ENCODE measurements at regions of chr15 and their contacts with region 1.

Region 1: DNA sequence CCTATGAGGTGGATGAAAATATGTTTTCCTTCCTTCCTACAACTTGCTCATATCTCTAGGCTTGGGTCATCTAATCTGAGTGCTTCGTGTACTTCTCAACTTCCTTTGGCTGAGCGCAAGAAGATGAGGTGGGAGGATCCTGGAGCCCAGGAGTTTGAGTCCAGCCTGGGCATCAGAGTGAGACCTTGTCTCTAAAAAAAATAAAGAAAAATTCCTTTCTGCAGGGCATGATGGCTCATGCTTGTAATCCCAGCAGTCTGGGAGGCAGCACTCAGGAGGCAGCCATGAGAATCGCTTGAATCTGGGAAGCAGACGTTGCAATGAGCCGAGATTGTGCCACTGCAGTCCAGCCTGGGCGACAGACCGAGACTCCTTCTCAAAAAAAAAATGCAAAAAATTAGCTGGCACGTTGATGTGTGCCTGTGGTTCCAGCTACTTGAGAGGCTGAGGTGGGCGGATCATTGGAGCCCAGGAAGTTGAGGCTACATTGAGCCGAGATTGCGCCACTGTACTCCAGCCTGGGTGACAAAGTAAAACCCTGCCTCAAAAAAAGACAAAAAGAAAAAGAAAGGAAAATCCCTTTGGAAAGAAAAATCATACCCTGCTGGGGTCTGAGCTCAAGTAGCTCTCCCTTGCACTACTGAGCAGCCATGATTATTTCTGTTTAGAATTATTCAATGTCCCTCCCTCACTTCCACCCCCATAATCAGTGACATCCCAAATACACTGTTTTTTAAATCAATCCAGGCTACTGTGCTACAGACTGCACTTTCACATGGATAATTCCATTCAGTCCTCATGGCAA is 28.0 kb upstream of the RAB11A start:
- DNase-seq: peak; percentile 22
- ATAC-seq: peak; percentile 70
- H3K4me3 ChIP-seq: no peak overlapping the region
- H3K27ac ChIP-seq: no peak overlapping the region
- H3K4me1 ChIP-seq: peaks cover 2% of the 10 kb centered on the region; the same call in 1 of the 2 replicates
- H3K27me3 ChIP-seq: no peaks in the 10 kb centered on the region
- CTCF ChIP-seq: no peak
- POLR2A ChIP-seq: no peak
- RAD21 ChIP-seq: no peak

Region 2: GRCh38 chr15:65512807-65513416 is 328.4 kb before region 1 on chr15:
- CTCF ChIA-PET with region 1: no interaction called
- POLR2A ChIA-PET with region 1: no interaction called
- dilution Hi-C with region 1: no loop called
- in situ Hi-C with region 1: no loop called
- intact Hi-C with region 1: no loop called
- DNase-seq: no peak
- ATAC-seq: no peak
- H3K4me3 ChIP-seq: no peak overlapping the region
- H3K27ac ChIP-seq: no peak overlapping the region
- H3K4me1 ChIP-seq: peaks cover 4% of the 10 kb centered on the region
- H3K27me3 ChIP-seq: no peaks in the 10 kb centered on the region
- CTCF ChIP-seq: no peak
- POLR2A ChIP-seq: no peak
- RAD21 ChIP-seq: no peak

Region 3: GRCh38 chr15:65752151-65752700 is 89.1 kb before region 1 on chr15:
- CTCF ChIA-PET with region 1: no interaction called
- POLR2A ChIA-PET with region 1: interaction called, 3 read pairs
- dilution Hi-C with region 1: no loop called
- in situ Hi-C with region 1: no loop called
- intact Hi-C with region 1: loop called (anchors 10 kb)
- DNase-seq: peak; percentile 63
- ATAC-seq: peak; percentile 44
- H3K4me3 ChIP-seq: no peak overlapping the region
- H3K27ac ChIP-seq: no peak overlapping the region
- H3K4me1 ChIP-seq: no peaks in the 10 kb centered on the region
- H3K27me3 ChIP-seq: no peaks in the 10 kb centered on the region
- CTCF ChIP-seq: no peak
- POLR2A ChIP-seq: no peak
- RAD21 ChIP-seq: no peak

Measured in IMR-90 (cell line).